ENCODE measurements at regions of chr18 and their contacts with region 1.

Region 1: GRCh38 chr18:59056706-59057492 is 82.8 kb upstream of the SEC11C start:
- DNase-seq: peak; percentile 79
- H3K4me3 ChIP-seq: no peak overlapping the region
- H3K27ac ChIP-seq: no peak overlapping the region
- H3K4me1 ChIP-seq: no peaks in the 10 kb centered on the region
- H3K27me3 ChIP-seq: no peaks in the 10 kb centered on the region
- CTCF ChIP-seq: peak; percentile 86

Region 2: GRCh38 chr18:58781627-58782194 is 275.2 kb before region 1 on chr18:
- intact Hi-C with region 1: loop called (anchors 2 kb)
- DNase-seq: peak; percentile 83
- H3K4me3 ChIP-seq: no peak overlapping the region
- H3K27ac ChIP-seq: no peak overlapping the region
- H3K4me1 ChIP-seq: no peaks in the 10 kb centered on the region
- H3K27me3 ChIP-seq: no peaks in the 10 kb centered on the region
- CTCF ChIP-seq: peak; percentile 92

Region 3: DNA sequence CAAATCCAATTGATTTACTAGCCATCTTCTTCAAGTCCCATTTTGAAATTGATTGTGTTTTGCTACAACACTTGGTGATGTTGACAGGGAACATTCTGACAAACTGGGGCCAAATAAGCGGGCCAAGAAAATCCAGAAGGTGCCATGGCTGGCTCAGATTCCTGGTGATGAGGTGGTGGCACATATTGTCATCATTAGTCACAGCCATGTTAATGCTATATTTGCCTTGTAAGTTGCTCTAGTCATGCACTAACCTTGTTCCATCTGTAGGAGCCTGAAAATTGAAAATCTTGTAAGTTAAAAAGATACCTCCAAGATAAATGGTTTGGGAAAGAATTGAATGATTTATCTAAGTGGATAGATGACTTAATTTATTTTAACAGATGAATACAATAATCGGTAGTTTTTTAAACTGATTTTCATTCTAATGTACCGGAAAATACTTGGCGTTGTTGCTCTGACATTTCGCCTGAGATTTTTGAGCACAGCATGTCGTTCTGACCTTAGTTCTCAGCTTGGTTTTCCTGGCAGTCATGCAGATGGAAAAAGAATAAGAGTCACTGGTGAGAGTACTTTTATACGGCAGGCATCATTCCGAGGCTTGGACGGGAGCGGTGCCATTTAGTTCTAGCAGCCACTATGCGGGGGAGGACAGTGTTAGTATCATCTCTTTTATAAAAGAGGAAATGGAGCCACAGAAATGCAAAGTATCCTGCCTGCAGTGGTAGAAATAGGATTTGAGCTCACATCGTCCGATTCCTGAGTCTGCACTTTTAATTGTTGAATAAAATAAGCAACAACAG is 58.3 kb before region 1 on chr18:
- intact Hi-C with region 1: no loop called
- DNase-seq: no peak
- H3K4me3 ChIP-seq: no peak overlapping the region
- H3K27ac ChIP-seq: no peak overlapping the region
- H3K4me1 ChIP-seq: no peaks in the 10 kb centered on the region
- H3K27me3 ChIP-seq: no peaks in the 10 kb centered on the region
- CTCF ChIP-seq: no peak

Region 4: GRCh38 chr18:59332986-59333385 is 276.1 kb after region 1 on chr18:
- intact Hi-C with region 1: no loop called
- DNase-seq: no peak
- H3K4me3 ChIP-seq: no peak overlapping the region
- H3K27ac ChIP-seq: no peak overlapping the region
- H3K4me1 ChIP-seq: no peaks in the 10 kb centered on the region
- H3K27me3 ChIP-seq: no peaks in the 10 kb centered on the region
- CTCF ChIP-seq: no peak